PC-3 (cell line): ENCODE measurements at regions of chr4 and their contacts with region 1.

Region 1: GRCh38 chr4:18934197-18934596 is 912.6 kb upstream of the LCORL start:
- DNase-seq: peak; percentile 33
- ATAC-seq: peak; percentile 56
- H3K4me3 ChIP-seq: no peak overlapping the region
- H3K27ac ChIP-seq: no peak overlapping the region
- H3K4me1 ChIP-seq: no peaks in the 10 kb centered on the region
- H3K27me3 ChIP-seq: no peaks in the 10 kb centered on the region; the same call in 1 of the 2 replicates
- CTCF ChIP-seq: peak; percentile 58

Region 2: DNA sequence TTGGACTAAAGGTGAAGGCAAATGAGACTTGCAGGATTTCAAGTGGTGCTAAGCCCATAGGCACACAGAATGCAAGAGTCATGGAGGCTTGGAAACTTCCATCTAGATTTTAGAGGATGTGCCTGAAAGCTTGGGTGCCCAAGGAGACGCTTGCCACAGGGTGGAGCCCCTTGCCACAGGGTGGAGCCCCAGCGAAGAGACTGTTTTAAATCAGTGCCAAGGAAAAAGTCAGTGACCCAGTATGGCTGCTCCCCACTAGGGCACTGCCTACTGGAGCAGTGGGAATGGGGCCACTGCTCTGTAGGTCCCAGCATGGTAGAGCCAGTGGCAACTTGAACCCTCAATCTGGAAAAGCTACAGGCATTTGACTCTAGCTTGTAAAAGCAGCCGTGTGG is 118.4 kb before region 1 on chr4:
- CTCF ChIA-PET with region 1: no interaction called
- POLR2A ChIA-PET with region 1: no interaction called
- intact Hi-C with region 1: loop called (anchors 1 kb)
- DNase-seq: peak; percentile 15
- ATAC-seq: no peak; the same call in 1 of the 2 replicates
- H3K4me3 ChIP-seq: no peak overlapping the region
- H3K27ac ChIP-seq: no peak overlapping the region
- H3K4me1 ChIP-seq: no peaks in the 10 kb centered on the region
- H3K27me3 ChIP-seq: no peaks in the 10 kb centered on the region
- CTCF ChIP-seq: peak; percentile 28; the same call in 1 of the 2 replicates

Region 3: DNA sequence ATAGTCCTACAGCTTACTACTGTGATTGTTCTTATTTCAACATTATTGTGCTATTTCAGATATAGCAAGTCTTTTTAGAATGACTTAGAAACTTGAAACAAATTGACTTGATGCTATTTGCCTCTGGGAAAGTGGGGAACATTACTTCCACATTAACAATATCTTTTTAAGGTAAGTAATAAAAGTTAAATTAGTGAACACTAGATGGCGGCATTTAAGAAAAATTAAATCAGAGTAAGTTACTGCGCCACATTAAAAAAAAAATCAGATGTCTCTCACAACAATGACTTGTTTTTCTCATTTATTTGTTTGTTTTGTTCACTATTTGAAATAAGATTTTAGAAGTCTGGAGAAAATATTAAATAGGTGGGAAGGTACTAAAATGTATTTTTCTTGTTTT is 290.6 kb after region 1 on chr4:
- CTCF ChIA-PET with region 1: no interaction called
- POLR2A ChIA-PET with region 1: no interaction called
- intact Hi-C with region 1: no loop called
- DNase-seq: peak; percentile 66
- ATAC-seq: no peak
- H3K4me3 ChIP-seq: no peak overlapping the region
- H3K27ac ChIP-seq: no peak overlapping the region
- H3K4me1 ChIP-seq: peaks cover 5% of the 10 kb centered on the region; the same call in 1 of the 2 replicates
- H3K27me3 ChIP-seq: no peaks in the 10 kb centered on the region
- CTCF ChIP-seq: peak; percentile 50